Spleen (tissue), 13 donors: ENCODE measurements at regions of chr12 and their contacts with region 1.

Region 1: GRCh38 chr12:48105862-48106680 is at the start of gene SENP1:
- DNase-seq: peak; percentile 96
- H3K4me3 ChIP-seq: peak within 1 kb of the TSS; percentile 82 to 97 (median 94)
- H3K27ac ChIP-seq: peak within 1 kb of the TSS; percentile 92 to 97 (median 96)
- H3K4me1 ChIP-seq: peaks cover 16 to 57% (median 34%) of the 10 kb centered on the region in 6 donors
- H3K27me3 ChIP-seq: no peaks in the 10 kb centered on the region
- CTCF ChIP-seq: peak in 9 of 11 experiments; percentile 9 to 56 (median 40)
- POLR2A ChIP-seq: no peak
- total RNA-seq, gene SENP1: 23.3 to 37.4 (median 26.1) TPM

Region 2: DNA sequence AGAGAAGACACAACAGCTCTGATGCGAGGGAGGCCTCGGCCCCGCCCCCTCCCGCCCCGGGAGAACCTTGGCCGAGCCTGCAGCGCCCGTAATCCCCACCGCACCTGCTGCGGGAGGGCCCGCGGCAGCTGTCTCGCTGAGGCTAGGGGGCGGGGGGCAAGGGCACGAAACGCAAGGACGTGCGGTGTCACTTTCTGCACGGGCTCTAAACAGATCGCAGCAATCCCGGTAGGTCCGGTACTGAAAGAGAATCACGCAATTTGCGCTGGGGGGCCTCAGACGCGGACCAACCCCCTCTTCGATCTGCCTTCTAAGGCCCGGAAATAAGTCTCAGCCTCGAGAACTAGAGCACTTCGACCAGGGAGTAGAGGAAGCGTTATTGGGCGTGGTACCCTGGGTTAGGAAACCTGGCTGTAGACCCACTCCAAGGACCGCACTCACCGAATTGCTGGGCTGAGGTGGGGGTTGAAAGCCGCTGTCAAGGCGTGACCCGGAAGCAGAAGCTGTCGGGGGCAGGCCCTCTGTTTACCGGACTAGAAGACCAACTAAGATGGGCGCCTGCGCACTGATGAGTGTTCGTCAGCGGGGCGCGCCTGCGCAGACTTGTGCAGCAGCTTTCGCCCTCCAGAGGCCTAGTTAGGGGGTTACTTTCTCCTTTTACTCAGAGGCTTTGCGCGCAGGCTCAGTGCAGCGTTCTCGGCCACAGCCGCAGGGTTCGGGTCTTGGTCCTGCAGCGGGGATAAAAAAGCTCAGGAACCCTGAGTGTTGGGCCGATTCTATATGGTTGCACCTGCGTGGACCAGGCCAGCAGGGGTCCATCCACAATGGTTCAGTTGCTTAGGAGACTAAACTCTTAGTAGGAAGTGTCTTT is 51.2 kb after region 1 on chr12 and contains the start of gene ASB8:
- intact Hi-C with region 1: loop called (anchors 10 kb)
- DNase-seq: peak; percentile 99
- H3K4me3 ChIP-seq: peak within 1 kb of the TSS; percentile 62 to 96 (median 90)
- H3K27ac ChIP-seq: peak within 1 kb of the TSS; percentile 84 to 92 (median 90)
- H3K4me1 ChIP-seq: peaks cover 6 to 64% (median 26%) of the 10 kb centered on the region in 6 donors
- H3K27me3 ChIP-seq: no peaks in the 10 kb centered on the region
- CTCF ChIP-seq: peak; percentile 25 to 76 (median 66)
- POLR2A ChIP-seq: peak in 2 of 3 donors; percentile 11 to 77
- total RNA-seq, gene ASB8: 34.7 to 48.8 (median 40.2) TPM

Region 3: GRCh38 chr12:48336562-48336961 is 230.5 kb after region 1 on chr12:
- intact Hi-C with region 1: no loop called
- DNase-seq: no peak
- H3K4me3 ChIP-seq: no peak overlapping the region
- H3K27ac ChIP-seq: no peak overlapping the region
- H3K4me1 ChIP-seq: peaks cover 0 to 19% (median 0%) of the 10 kb centered on the region in 6 donors
- H3K27me3 ChIP-seq: no peaks in the 10 kb centered on the region
- CTCF ChIP-seq: no peak
- POLR2A ChIP-seq: no peak